ENCODE measurements at regions of chr5 and their contacts with region 1.

Region 1: DNA sequence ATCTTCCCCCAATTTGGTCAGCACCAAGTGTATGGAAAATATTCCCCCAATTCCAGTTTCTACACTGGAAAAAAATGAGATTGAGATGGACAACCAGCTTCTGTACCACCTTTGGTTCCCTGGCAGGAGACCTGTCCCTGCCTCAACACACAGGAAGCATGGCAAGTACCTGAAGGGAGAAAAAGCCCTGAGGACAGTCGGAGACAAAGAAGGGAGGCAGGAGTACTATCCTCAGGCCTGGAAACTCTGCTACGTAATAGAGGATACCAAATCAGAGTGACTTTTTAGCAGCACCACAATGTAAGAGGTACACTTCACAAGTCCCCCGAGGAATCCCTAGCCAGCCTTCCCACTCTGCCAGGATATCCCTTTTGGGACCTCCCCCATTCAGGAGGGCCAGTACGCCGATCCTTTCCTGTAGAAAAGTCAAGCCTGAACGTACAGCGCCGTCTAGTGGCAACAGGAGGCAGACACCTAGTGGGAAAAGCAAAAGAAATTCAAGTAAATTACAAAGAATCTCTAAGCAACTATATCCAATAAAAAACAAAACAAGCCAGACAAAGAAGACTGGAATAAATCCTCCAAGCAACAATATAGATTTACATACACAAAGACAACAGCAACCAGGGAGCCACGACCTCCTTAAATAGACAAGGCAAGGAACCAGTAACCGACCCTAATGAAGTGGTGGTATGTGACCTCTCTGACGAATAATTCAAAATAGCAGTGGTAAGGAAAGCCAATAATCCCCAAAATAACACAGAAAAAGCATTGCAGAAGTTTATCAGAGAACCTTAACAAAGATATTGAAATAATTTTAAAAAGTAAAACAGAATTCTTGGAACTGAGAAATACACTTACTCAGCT is 63.3 kb upstream of the SLCO6A1 start:
- DNase-seq: peak; percentile 55 to 59
- H3K4me3 ChIP-seq: no peak overlapping the region
- H3K4me3 Mint-ChIP-seq: no peak overlapping the region
- H3K27ac Mint-ChIP-seq: no peak overlapping the region
- H3K4me1 ChIP-seq: no peaks in the 10 kb centered on the region
- H3K4me1 Mint-ChIP-seq: no peaks in the 10 kb centered on the region
- H3K27me3 ChIP-seq: no peaks in the 10 kb centered on the region
- H3K27me3 Mint-ChIP-seq: no peaks in the 10 kb centered on the region
- CTCF ChIP-seq: peak; percentile 75 to 77

Region 2: GRCh38 chr5:102277144-102277543 is 285.0 kb before region 1 on chr5:
- CTCF ChIA-PET with region 1: no interaction called
- POLR2A ChIA-PET with region 1: no interaction called
- intact Hi-C with region 1: no loop called
- DNase-seq: no peak
- H3K4me3 ChIP-seq: no peak overlapping the region
- H3K4me3 Mint-ChIP-seq: no peak overlapping the region
- H3K27ac Mint-ChIP-seq: no peak overlapping the region
- H3K4me1 ChIP-seq: no peaks in the 10 kb centered on the region
- H3K4me1 Mint-ChIP-seq: no peaks in the 10 kb centered on the region
- H3K27me3 ChIP-seq: no peaks in the 10 kb centered on the region
- H3K27me3 Mint-ChIP-seq: no peaks in the 10 kb centered on the region
- CTCF ChIP-seq: no peak

Region 3: GRCh38 chr5:102453716-102454115 is 108.4 kb before region 1 on chr5:
- CTCF ChIA-PET with region 1: no interaction called
- POLR2A ChIA-PET with region 1: no interaction called
- intact Hi-C with region 1: loop called (anchors 5 kb)
- DNase-seq: no peak
- H3K4me3 ChIP-seq: no peak overlapping the region
- H3K4me3 Mint-ChIP-seq: no peak overlapping the region
- H3K27ac Mint-ChIP-seq: no peak overlapping the region
- H3K4me1 ChIP-seq: no peaks in the 10 kb centered on the region
- H3K4me1 Mint-ChIP-seq: no peaks in the 10 kb centered on the region
- H3K27me3 ChIP-seq: no peaks in the 10 kb centered on the region
- H3K27me3 Mint-ChIP-seq: no peaks in the 10 kb centered on the region
- CTCF ChIP-seq: no peak

Region 4: GRCh38 chr5:102536323-102536928 is 25.7 kb before region 1 on chr5:
- CTCF ChIA-PET with region 1: no interaction called
- POLR2A ChIA-PET with region 1: no interaction called
- intact Hi-C with region 1: loop called (anchors 2 kb)
- DNase-seq: no peak
- H3K4me3 ChIP-seq: no peak overlapping the region
- H3K4me3 Mint-ChIP-seq: no peak overlapping the region
- H3K27ac Mint-ChIP-seq: no peak overlapping the region
- H3K4me1 ChIP-seq: no peaks in the 10 kb centered on the region
- H3K4me1 Mint-ChIP-seq: no peaks in the 10 kb centered on the region
- H3K27me3 ChIP-seq: no peaks in the 10 kb centered on the region
- H3K27me3 Mint-ChIP-seq: no peaks in the 10 kb centered on the region
- CTCF ChIP-seq: peak; percentile 14 to 17